ENCODE measurements at regions of chr20 and their contacts with region 1.

Region 1: DNA sequence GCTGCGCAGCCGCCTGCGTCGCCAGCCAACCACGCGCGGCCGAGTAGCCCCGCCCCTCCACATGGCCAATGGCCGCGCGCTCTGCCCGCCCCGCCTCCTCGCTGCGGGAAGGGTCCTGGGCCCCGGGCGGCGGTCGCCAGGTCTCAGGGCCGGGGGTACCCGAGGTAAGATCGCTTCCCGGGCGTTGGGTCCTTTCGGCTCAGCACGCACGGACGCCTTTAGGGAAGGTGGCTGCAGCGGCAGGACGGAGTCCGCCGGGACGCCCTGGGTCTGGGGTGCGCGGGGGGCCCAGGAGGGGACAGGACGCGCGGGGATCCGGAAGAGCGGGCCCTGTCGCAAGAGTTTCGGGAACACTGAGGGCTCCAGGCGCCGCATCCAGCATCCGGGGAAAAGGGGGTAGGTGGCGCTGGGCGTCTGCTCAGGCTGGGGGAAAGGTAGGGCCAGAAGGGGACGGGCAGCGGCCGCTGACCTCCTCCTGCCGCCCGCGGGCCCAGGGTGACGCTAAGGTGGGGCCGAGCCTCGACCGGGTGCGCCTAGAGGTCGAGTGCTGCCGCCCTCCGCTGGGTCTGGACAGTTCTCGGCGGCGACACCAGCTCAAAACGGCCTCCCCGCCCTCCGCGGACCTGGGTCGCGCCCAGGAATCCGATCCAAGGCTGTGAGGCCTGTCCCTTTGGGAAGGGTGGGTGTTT is at the start of gene MAVS:
- DNase-seq: peak; percentile 96
- ATAC-seq: peak; percentile 99
- total RNA-seq, gene MAVS: 34.8 TPM

Region 2: GRCh38 chr20:3795511-3796468 is 51.1 kb before region 1 on chr20 and contains the start of gene CDC25B:
- intact Hi-C with region 1: loop called (anchors 2 kb)
- DNase-seq: peak; percentile 96
- ATAC-seq: peak; percentile 96
- total RNA-seq, gene CDC25B: 7.5 TPM

Measured in left ventricle myocardium superior (tissue), 1 donor.